B cell (primary cell): ENCODE measurements at regions of chr11 and their contacts with region 1.

Region 1: DNA sequence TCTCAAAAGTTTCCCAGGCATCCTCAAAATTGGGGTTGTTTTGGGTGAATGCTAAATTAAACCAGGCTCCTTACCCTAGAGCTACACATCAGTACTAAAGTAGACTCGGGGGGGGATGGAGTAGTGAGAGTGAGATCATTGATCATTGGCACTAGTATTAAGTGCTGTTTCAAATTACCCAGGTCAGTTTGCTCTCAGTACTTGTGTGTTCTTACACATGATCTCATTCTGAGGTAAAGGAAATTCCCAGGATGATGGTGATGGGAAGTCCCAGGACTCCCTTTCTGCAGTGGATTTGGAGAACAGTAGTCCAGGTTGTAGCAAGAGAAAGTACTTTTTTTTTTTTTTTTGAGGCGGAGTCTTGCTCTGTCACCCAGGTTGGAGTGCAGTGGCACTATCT is 12.5 kb downstream of the RBM4 start:
- DNase-seq: no peak
- ATAC-seq: no peak
- H3K4me3 ChIP-seq: no peak overlapping the region
- H3K4me3 Mint-ChIP-seq: no peak overlapping the region
- H3K27ac ChIP-seq: no peak overlapping the region
- H3K27ac Mint-ChIP-seq: no peak overlapping the region
- H3K4me1 ChIP-seq: no peaks in the 10 kb centered on the region
- H3K4me1 Mint-ChIP-seq: peaks cover 33% of the 10 kb centered on the region
- H3K27me3 ChIP-seq: no peaks in the 10 kb centered on the region
- H3K27me3 Mint-ChIP-seq: no peaks in the 10 kb centered on the region
- CTCF ChIP-seq: no peak

Region 2: DNA sequence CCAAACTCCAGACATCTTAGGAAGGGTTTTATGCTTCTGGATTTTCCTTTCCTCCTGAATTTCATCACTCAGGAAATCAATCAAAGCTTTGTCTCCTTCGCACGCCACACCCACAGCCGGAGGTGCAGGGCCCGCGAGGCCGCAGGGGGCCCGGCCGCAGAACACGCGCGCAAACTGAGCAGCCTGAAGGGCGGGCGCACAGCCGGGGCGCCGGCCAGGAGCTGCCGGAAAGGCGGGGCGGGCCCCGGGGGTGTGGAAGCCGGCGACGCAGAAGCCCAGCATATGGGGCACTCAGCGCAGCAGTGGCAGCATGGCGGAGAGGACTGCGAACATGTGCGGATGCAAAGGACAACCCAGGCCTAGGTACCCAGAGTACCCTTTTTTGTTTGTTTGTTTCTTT is 111.1 kb after region 1 on chr11:
- CTCF ChIA-PET with region 1: no interaction called
- POLR2A ChIA-PET with region 1: no interaction called
- intact Hi-C with region 1: no loop called
- DNase-seq: no peak
- ATAC-seq: no peak
- H3K4me3 ChIP-seq: no peak overlapping the region
- H3K4me3 Mint-ChIP-seq: no peak overlapping the region
- H3K27ac ChIP-seq: no peak overlapping the region
- H3K27ac Mint-ChIP-seq: no peak overlapping the region
- H3K4me1 ChIP-seq: peaks cover 3 to 4% of the 10 kb centered on the region in 2 donors
- H3K4me1 Mint-ChIP-seq: peaks cover 4% of the 10 kb centered on the region
- H3K27me3 ChIP-seq: no peaks in the 10 kb centered on the region
- H3K27me3 Mint-ChIP-seq: no peaks in the 10 kb centered on the region
- CTCF ChIP-seq: no peak

Region 3: DNA sequence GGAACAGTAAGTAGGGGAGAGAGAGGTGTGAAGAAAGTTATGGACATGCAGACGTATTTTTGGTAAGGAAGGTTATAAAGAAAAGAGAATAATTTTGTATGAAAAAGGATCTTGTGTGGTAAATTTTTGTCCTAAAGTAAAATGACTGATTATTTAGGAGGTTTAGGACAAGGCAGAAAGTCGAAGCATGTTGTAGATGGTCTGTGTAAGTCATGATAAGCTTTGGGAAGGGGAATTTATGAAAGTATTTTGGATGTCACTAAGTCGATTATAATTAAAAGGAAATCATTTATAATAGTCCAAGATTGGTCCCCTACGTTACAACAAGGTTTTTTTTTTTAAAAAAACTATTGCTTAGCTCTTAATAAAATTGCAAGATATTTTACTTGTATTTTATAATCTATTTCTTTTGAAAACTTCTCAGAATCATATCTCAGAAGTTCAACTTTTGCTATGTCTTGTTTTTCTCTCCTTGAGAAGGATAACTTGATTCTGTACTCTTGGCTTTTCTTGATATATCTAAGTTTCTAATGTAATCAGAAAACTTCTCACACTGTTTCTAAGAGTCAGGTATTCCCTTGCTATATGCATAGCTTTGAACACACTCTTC is 883.2 kb after region 1 on chr11:
- CTCF ChIA-PET with region 1: no interaction called
- POLR2A ChIA-PET with region 1: no interaction called
- intact Hi-C with region 1: loop called (anchors 10 kb)
- DNase-seq: no peak
- ATAC-seq: no peak
- H3K4me3 ChIP-seq: no peak overlapping the region
- H3K4me3 Mint-ChIP-seq: no peak overlapping the region
- H3K27ac ChIP-seq: no peak overlapping the region
- H3K27ac Mint-ChIP-seq: no peak overlapping the region
- H3K4me1 ChIP-seq: no peaks in the 10 kb centered on the region
- H3K4me1 Mint-ChIP-seq: no peaks in the 10 kb centered on the region
- H3K27me3 ChIP-seq: peaks cover 0 to 5% (median 0%) of the 10 kb centered on the region in 4 experiments
- H3K27me3 Mint-ChIP-seq: peaks cover 9% of the 10 kb centered on the region
- CTCF ChIP-seq: no peak